Activated CD4-positive, alpha-beta memory T cell treated with anti-CD3 and anti-CD28 coated beads for 36 hours (primary cell): ENCODE measurements at regions of chr3 and their contacts with region 1.

Region 1: DNA sequence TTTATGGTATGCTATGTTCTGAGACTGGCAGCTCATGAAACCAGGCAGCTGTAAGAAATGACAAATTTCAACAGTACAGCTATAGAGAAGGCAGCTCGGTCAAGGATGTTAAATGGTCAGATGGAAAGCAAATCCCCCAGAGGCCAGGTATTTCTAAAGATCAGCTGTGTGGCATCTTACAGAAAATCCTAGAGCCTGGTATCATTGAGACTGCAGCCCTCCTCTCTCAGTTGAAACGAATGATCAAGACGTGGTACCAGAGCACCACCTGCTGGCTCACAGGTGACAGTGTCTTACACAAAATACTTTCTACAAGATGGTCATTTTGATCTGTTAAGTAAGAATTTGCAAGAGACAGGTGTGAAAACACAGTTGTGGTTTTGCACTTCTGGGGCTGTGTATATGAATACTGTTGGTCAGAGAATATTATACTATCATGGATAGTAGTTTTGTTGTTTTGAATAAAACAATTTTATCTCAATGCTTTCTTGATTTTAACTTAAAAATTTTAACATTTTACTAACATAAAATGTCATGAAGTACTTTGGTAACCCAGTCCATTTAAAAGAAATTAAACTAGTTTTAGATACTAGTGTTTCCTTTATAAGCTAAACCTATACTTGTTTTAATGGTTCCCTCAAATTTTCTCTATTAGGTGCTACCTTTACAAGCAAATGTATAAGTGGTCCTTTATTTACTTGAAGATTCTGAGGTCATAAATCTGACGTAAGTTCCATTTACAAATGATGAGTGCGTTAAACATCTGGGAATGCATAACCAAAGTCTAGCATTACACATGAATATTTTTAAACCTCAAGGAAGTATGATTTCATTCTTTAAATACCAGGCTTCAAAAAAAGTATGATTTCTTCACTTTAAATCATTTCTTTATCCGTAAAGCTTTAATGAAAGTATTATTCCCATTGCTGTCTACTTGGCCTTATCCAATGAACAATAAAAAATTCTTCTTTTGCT is 121.8 kb downstream of the PDZRN3 start:
- DNase-seq: peak; percentile 66
- H3K4me3 Mint-ChIP-seq: no peak overlapping the region
- H3K27ac Mint-ChIP-seq: no peak overlapping the region
- H3K4me1 Mint-ChIP-seq: no peaks in the 10 kb centered on the region
- H3K27me3 Mint-ChIP-seq: peaks cover 3% of the 10 kb centered on the region

Region 2: GRCh38 chr3:73094951-73095350 is 407.9 kb before region 1 on chr3:
- CTCF ChIA-PET with region 1: interaction called, 44 read pairs
- POLR2A ChIA-PET with region 1: no interaction called
- intact Hi-C with region 1: no loop called
- DNase-seq: no peak
- H3K4me3 Mint-ChIP-seq: no peak overlapping the region
- H3K27ac Mint-ChIP-seq: no peak overlapping the region
- H3K4me1 Mint-ChIP-seq: peaks cover 7% of the 10 kb centered on the region
- H3K27me3 Mint-ChIP-seq: peaks cover 7% of the 10 kb centered on the region

Region 3: DNA sequence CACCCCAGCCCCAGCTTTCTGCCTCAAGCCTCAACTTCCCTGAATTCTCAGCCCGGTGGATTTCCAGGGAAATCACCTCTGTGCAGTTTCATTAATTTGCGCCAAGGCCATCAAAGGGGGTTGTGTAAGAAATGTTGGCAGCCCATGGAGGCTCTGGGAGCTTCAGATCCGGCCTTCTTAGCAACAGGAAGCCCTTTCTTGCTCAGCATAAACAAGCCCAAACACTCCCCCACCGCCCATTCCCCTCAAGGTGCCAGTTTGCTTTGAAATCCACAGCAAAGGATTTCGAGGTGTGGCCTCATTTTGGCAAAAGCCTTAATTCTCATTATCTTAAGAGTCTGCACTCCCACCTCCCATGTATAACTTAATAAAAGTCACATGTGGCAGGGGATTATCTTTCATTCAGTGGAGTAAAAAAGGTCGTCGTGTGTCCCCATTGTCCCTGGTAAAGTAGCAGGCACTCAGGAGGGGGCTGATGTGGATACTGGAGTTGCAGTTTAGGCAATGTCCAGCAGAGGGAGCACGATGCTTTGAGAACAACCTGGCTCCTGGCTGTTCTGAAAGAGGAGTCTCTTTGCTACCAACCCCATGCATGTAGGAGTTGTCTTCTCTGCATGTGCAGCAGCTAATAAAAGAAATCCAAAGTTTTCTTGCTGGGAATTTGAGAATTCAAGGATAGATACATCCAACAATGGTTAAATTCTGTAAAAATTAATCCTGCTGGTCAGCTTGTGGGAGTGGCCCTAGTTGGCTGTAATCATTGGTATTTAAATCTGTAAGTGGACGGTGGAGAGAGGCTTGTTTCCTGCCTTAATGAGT is 401.9 kb before region 1 on chr3:
- CTCF ChIA-PET with region 1: interaction called, 44 read pairs
- POLR2A ChIA-PET with region 1: no interaction called
- intact Hi-C with region 1: loop called (anchors 1 kb)
- DNase-seq: peak; percentile 85
- H3K4me3 Mint-ChIP-seq: no peak overlapping the region
- H3K27ac Mint-ChIP-seq: no peak overlapping the region
- H3K4me1 Mint-ChIP-seq: no peaks in the 10 kb centered on the region
- H3K27me3 Mint-ChIP-seq: peaks cover 4% of the 10 kb centered on the region

Region 4: DNA sequence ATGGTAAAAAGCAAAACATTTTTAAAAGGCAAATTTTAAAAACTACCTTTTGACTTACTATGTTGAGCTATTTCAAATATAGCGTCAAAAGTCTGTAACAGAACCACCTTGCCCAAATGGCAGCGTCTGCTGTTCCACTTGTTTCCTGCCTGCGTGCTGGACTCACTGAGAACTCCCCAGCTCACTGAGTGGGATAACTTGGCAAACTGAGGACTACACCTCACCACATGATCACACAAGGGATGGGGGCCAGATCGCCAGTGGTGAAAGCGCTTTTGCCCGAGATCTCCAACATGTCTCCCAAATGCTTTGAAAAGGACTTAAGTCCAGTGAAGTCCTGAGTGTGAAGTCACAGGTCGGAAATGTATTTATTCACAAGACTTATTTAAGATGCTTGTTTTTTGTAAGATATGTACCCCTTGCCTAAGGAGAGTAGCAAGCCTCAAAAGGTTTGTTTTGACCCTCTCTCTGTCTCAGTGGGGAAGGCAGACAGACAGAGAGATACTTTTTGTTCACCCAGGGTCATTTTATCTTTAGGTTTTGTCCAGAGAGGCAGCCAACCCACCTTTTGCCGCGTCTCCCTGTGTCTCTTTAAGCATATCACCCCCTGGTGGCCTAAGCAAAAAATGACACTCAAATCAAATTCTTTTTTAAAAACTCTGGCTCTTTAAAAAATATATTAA is 70.7 kb before region 1 on chr3:
- CTCF ChIA-PET with region 1: interaction called, 4 read pairs
- POLR2A ChIA-PET with region 1: no interaction called
- intact Hi-C with region 1: loop called (anchors 1 kb)
- DNase-seq: no peak
- H3K4me3 Mint-ChIP-seq: no peak overlapping the region
- H3K27ac Mint-ChIP-seq: no peak overlapping the region
- H3K4me1 Mint-ChIP-seq: no peaks in the 10 kb centered on the region
- H3K27me3 Mint-ChIP-seq: peaks cover 1% of the 10 kb centered on the region

Region 5: DNA sequence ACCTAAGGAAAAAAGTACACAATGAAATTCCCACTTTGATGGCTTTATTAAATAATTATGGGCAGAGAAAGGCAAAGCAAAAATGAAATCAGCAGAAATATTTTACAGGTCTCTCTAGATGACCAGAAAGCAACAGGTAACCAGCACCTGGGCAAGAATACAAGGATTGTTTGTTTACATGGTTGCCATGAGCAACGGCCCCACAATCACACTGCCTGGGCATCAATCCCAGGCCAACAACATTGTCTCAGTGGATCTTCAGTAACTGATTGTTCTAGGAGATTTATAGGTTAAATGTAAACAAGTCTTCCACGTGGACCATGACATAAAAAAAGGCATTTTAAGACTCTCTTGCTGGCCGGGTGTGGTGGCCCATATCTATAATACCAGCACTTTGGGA is 39.2 kb after region 1 on chr3:
- CTCF ChIA-PET with region 1: no interaction called
- POLR2A ChIA-PET with region 1: no interaction called
- intact Hi-C with region 1: no loop called
- DNase-seq: no peak
- H3K4me3 Mint-ChIP-seq: no peak overlapping the region
- H3K27ac Mint-ChIP-seq: no peak overlapping the region
- H3K4me1 Mint-ChIP-seq: no peaks in the 10 kb centered on the region
- H3K27me3 Mint-ChIP-seq: peaks cover 1% of the 10 kb centered on the region